Left colon (tissue), 2 donors: ENCODE measurements at regions of chr5 and their contacts with region 1.

Region 1: DNA sequence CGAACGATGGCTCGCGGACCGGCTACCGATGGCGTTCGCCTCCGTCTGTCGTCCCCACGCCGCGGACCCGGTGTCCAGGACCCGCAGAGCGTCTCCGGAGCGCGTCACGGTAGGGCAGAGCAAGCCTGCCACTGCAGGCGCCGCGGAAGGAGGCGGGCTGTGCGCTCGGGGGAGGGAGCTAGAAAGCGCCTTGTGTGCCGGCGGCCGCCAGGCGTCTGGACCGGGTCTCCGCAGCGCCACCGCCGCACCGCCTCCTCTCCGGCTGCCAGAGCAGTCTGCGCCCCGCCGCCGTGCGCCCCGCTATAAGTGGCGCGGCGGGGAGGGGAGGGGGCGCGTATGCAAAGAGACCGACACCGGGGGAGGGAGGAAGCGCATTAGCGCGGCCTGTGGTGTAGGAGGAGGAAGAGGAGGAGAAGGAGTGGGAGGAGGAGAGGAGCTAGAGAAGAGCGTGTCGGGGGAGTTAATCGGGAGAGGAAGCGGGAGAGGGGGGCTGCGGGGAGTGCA is at the start of gene ENC1:
- DNase-seq: peak; percentile 87 to 90
- ATAC-seq: peak; percentile 78
- total RNA-seq, gene ENC1: 18.9 to 27.4 TPM

Region 2: DNA sequence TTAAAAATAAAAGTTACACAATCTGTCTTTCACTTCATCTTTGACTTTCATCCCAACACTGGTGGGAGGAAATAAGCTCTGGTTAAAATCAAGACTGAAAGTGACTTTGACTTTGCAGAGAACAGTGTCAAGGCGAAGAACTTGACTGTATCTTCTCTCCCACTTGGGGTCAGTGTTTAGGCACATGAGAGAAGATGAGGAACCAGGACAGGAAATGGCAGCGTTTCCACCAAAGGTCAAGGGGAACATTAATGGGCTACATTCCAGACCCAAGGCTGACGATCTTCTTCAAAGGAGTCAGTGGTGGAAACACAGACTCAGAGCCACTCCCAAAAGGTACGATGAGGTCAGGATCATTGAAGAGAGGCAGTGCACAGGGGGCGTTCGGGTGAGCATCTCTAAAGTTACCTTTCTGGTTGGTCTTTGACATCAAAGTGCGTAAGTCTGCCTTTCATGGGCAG is 605.0 kb before region 1 on chr5:
- intact Hi-C with region 1: loop called in 1 of 2 experiments (anchors 10 kb)
- DNase-seq: peak in 1 of 2 donors; percentile 5
- ATAC-seq: peak; percentile 54

Region 3: DNA sequence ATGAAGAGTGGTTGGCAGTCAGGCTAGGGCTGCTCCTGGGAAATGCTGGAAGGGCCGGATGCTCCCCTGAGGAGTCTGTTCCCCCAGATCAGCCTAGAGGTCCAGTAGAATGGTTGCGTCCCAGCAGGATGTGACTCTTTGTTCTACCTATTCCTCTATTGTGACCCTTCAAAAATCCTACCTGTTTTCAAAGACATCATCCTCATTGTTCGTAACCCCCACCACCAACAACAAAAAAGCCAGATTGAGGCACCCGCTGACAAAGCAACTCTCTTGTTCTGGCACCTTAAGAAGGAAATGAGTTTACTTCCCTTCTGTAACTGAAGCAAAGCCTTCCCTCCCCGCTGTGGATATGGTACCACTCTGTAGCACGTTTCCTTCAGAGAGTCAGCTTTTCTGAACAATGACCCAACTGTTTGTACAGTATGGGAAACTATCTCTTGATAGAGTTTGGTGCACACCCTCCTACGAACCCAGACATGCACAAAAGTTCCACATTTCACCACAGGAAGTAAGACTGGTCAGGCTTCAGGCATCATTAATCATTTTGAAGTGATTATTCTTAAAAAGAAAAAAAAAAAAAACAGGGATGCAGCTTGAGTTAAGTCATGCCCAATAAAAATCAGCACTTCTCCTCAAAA is 207.1 kb before region 1 on chr5:
- intact Hi-C with region 1: no loop called
- DNase-seq: no peak
- ATAC-seq: no peak

Region 4: GRCh38 chr5:74736759-74737158 is 96.3 kb after region 1 on chr5:
- intact Hi-C with region 1: no loop called
- DNase-seq: no peak
- ATAC-seq: no peak